Mucosa of descending colon (tissue), 3 donors: ENCODE measurements at regions of chr7 and their contacts with region 1.

Region 1: DNA sequence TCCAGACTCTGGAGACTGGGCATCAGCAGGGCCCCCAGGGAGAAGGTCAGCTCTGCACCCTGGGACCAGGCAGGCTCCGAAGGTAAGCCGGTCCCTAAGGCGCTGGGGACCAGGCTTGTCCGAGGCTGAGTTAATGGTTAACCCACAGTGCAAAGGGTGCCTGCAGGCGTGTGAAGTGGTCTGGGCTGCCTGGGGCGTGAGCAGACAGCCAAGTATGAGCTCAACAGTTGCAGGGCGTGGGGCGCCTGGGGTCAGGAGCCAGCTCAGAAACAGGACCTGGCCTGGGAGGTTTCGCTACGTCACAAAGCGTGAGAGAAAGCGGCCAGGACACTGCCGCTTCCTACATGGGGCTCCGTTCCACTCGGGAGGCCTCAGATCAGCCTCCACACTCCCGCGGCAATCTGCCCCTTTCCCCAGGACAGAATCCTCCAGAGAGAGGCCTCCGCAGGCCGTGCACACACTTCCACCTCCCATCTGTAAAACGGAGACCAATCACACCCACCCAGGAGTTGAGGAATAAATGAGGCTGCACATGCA is 16.0 kb downstream of the PDGFA start:
- DNase-seq: peak; percentile 92 to 95 (median 94)
- ATAC-seq: peak; percentile 90
- H3K4me3 ChIP-seq: no peak overlapping the region
- H3K4me1 ChIP-seq: peaks cover 37% of the 10 kb centered on the region
- CTCF ChIP-seq: no peak

Region 2: DNA sequence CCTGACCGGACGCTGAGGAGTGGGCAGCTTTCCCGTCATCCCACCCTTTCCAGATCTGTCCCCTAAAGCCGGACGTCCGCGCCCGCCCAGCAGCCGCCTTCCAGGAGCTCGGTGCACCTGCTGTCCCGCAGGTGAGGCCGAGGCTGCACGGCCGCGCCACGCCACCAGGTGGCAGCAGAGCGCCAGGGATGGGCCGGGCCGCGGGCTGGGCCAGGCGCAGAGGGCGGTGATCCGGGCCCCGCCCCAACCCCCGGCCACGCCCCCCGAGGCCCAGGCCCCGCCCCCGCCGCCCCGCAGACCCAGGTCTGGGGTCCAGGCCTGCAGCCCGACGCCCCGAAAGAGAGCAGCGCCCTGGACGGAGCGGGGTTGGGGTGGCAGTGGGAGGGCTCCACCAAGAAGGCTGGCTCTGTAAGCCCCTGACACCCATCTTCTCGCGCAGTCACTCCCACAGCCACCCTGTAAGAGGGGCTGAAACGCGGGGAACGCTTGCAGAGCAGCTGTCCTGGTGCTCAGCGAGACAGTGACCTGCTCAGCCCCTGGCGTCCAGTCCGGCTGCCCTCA is 181.5 kb before region 1 on chr7:
- intact Hi-C with region 1: loop called in 1 of 2 experiments (anchors 10 kb)
- DNase-seq: peak; percentile 84 to 97 (median 93)
- ATAC-seq: peak; percentile 79
- H3K4me3 ChIP-seq: no peak overlapping the region
- H3K4me1 ChIP-seq: peaks cover 50% of the 10 kb centered on the region
- CTCF ChIP-seq: peak; percentile 94

Region 3: DNA sequence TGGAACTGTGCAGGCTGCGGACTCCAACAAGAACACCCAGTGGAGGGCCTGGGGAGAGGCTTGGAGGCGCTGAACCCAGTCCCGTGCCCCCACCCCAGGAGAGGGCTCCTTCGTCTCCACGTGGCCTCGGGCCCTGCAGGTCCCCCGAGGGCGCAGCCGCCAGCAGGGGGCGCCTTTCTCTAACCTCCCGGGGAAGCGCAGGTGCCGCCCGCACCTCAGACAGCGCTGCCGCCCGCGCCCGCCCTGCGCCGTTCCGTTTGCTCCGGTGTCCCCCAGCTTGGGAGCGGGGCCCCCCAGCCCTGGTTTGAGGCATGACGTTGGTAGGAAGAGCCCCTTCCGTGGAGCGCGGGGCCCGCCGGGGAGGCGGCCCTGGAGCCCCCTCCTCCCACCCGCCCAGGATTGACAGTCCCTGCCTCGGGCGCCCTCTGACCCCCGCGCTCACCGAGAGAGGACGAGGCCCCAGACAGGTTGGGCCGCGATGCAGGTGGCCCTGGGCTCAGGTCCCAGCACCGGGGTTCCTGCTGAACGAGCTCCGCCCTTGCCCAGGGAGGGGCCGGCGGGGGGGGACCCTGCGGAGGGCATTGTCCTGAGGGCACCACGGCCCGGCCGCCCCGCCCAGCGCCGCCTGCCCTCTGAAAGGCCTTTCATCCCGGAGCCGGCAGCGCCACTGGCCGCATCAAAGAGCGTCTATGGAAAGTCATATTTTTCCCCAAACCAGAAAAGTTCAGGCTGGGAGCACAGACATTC is 170.8 kb before region 1 on chr7:
- intact Hi-C with region 1: loop called (anchors 10 kb)
- DNase-seq: peak; percentile 88 to 94 (median 94)
- ATAC-seq: peak; percentile 77
- H3K4me3 ChIP-seq: no peak overlapping the region
- H3K4me1 ChIP-seq: peaks cover 50% of the 10 kb centered on the region
- CTCF ChIP-seq: peak; percentile 86

Region 4: GRCh38 chr7:936131-937054 is 432.8 kb after region 1 on chr7:
- intact Hi-C with region 1: no loop called
- DNase-seq: peak in 2 of 3 donors; percentile 26 to 53
- ATAC-seq: peak; percentile 59
- H3K4me3 ChIP-seq: no peak overlapping the region
- H3K4me1 ChIP-seq: no peaks in the 10 kb centered on the region
- CTCF ChIP-seq: no peak